Mammary epithelial cell (primary cell): ENCODE measurements at regions of chr17 and their contacts with region 1.

Region 1: GRCh38 chr17:33901085-33901484 is 354.0 kb upstream of the CCL2 start:
- DNase-seq: no peak
- H3K4me3 ChIP-seq: no peak overlapping the region
- H3K27ac ChIP-seq: no peak overlapping the region
- H3K4me1 ChIP-seq: no peaks in the 10 kb centered on the region
- H3K27me3 ChIP-seq: no peaks in the 10 kb centered on the region
- CTCF ChIP-seq: no peak

Region 2: DNA sequence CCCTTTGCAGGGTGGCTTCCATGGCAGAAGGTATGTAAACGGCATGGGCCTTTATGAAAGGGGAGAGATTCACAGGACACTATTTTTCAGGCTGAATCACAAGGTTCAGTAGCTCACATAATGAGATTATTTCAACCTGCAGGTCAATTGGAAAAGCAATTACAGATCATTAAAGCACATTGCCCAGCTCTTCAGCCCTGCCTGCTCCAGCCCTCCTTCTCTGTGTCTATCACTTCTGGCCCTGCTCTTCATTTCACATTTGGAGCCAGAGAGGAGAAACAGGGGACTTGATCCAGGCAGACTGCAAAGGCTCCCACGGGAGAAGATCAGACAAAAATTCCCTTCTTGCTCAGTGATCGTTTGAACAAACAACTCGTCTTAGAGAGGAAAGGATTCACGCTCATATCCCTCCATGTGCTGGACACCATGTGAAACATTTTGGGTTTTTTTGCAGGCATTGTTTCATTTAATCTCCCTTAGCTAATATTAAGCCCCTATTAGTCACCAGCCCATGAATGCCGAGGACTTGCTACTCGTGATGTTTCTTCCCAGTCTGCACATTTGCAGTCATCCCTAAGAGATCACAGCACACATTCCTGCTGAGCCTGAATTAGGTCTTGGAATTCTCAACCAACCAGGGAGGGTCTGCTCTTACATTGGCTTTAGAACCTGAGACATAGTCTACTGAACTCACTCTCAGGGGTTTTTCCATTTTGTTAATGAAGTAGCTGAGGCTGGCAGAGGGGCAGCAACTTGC is 89.9 kb before region 1 on chr17:
- CTCF ChIA-PET with region 1: no interaction called
- dilution Hi-C with region 1: loop called (anchors 10 kb)
- in situ Hi-C with region 1: no loop called
- intact Hi-C with region 1: no loop called
- DNase-seq: no peak
- H3K4me3 ChIP-seq: no peak overlapping the region
- H3K27ac ChIP-seq: no peak overlapping the region
- H3K4me1 ChIP-seq: no peaks in the 10 kb centered on the region
- H3K27me3 ChIP-seq: no peaks in the 10 kb centered on the region
- CTCF ChIP-seq: no peak

Region 3: GRCh38 chr17:33871720-33872540 is 29.2 kb before region 1 on chr17:
- CTCF ChIA-PET with region 1: no interaction called
- dilution Hi-C with region 1: no loop called
- in situ Hi-C with region 1: no loop called
- intact Hi-C with region 1: no loop called
- DNase-seq: peak; percentile 40
- H3K4me3 ChIP-seq: no peak overlapping the region
- H3K27ac ChIP-seq: no peak overlapping the region
- H3K4me1 ChIP-seq: no peaks in the 10 kb centered on the region
- H3K27me3 ChIP-seq: no peaks in the 10 kb centered on the region
- CTCF ChIP-seq: no peak

Region 4: GRCh38 chr17:33940769-33941370 is 39.8 kb after region 1 on chr17:
- CTCF ChIA-PET with region 1: no interaction called
- dilution Hi-C with region 1: loop called (anchors 5 kb)
- in situ Hi-C with region 1: no loop called
- intact Hi-C with region 1: no loop called
- DNase-seq: no peak
- H3K4me3 ChIP-seq: no peak overlapping the region
- H3K27ac ChIP-seq: no peak overlapping the region
- H3K4me1 ChIP-seq: no peaks in the 10 kb centered on the region
- H3K27me3 ChIP-seq: no peaks in the 10 kb centered on the region
- CTCF ChIP-seq: no peak